ENCODE measurements at regions of chr13 and their contacts with region 1.

Region 1: GRCh38 chr13:30408319-30409101 is 13.8 kb upstream of the UBE2L5 start:
- DNase-seq: peak; percentile 71 to 97
- H3K4me3 ChIP-seq: peak overlapping the region; percentile 39 to 55
- H3K27ac ChIP-seq: peak overlapping the region; percentile 95 to 96
- H3K4me1 ChIP-seq: peaks cover 5 to 21% of the 10 kb centered on the region in 2 donors
- H3K27me3 ChIP-seq: no peaks in the 10 kb centered on the region
- CTCF ChIP-seq: peak; percentile 75 to 91 (median 90)

Region 2: GRCh38 chr13:30132623-30133553 is 275.6 kb before region 1 on chr13:
- intact Hi-C with region 1: loop called (anchors 2 kb)
- DNase-seq: peak; percentile 87 to 98
- H3K4me3 ChIP-seq: peak overlapping the region in 1 of 2 donors; percentile 10
- H3K27ac ChIP-seq: no peak overlapping the region
- H3K4me1 ChIP-seq: no peaks in the 10 kb centered on the region
- H3K27me3 ChIP-seq: no peaks in the 10 kb centered on the region
- CTCF ChIP-seq: peak; percentile 83 to 95 (median 84)

Region 3: DNA sequence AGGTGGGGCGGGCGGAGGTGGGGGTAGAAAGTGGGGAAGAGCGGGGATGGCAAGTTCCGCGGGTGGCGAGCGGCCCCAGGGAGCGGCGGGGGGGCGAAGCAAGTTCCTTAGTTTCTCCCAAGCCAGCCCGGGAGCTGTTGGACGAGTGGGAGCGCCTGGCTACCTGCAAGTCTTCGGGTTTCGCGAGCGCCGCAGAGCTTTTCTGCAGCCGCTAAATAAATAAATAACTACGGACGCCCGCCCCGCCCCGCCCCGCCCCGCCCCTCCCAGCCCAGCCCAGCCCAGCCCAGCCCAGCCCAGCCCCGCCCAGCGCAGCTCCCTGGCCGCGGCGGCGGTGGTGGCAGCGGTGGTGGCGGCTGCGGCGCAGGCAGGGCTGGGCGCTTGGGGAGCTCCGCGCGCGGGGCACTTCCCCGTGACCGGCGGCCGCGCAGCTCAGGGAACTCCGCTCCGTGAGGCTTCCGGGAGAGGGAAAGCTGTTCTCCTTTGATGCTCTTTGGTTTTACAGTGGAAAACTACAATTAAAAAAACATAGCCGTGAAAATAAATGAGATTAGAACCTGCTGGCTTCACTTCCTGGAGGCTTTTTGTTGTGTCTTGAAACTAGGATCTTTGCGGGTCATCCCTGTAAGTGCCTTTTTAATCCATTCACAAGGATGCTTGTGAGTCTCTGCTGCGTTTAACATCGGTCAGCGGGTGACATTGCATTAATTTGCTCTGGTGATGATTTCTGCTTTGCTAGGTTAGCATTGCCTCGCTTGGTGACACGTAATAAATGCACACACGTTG is 13.7 kb after region 1 on chr13 and contains the start of gene UBE2L5:
- intact Hi-C with region 1: loop called (anchors 1 kb)
- DNase-seq: peak; percentile 10 to 87
- H3K4me3 ChIP-seq: peak within 1 kb of the TSS; percentile 73 to 75
- H3K27ac ChIP-seq: peak within 1 kb of the TSS; percentile 95 to 98
- H3K4me1 ChIP-seq: peaks cover 8 to 12% of the 10 kb centered on the region in 2 donors
- H3K27me3 ChIP-seq: no peaks in the 10 kb centered on the region
- CTCF ChIP-seq: no peak
- total RNA-seq, gene UBE2L5: not detected

Region 4: DNA sequence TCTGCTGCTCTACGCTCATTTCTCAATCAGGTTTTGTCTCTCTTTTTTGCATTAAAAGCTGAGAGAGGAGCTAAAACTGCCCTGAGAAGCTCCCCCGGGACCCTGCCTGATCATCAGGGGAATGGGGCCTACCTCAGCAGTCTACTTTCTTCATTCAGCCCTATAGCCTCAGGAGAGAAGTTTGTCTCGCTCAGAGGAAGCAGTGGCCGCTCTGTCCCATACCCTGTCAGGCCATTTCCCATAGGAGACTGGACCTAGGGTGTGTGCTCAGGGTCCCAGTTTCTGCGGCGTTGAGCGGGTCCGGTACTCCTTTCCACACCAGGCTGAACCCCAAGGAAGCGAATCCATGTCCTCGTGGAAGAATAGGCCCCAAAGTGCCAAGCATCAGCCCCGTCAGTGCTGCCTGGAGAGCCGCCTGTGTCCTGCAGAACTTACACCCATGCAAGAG is 35.5 kb after region 1 on chr13:
- intact Hi-C with region 1: loop called (anchors 1 kb)
- DNase-seq: no peak
- H3K4me3 ChIP-seq: no peak overlapping the region
- H3K27ac ChIP-seq: no peak overlapping the region
- H3K4me1 ChIP-seq: no peaks in the 10 kb centered on the region
- H3K27me3 ChIP-seq: no peaks in the 10 kb centered on the region
- CTCF ChIP-seq: no peak

Region 5: GRCh38 chr13:30673669-30674521 is 265.4 kb after region 1 on chr13:
- intact Hi-C with region 1: loop called (anchors 10 kb)
- DNase-seq: peak; percentile 79 to 96
- H3K4me3 ChIP-seq: peak overlapping the region; percentile 53 to 64
- H3K27ac ChIP-seq: peak overlapping the region; percentile 59 to 88
- H3K4me1 ChIP-seq: no peaks in the 10 kb centered on the region
- H3K27me3 ChIP-seq: no peaks in the 10 kb centered on the region
- CTCF ChIP-seq: peak; percentile 58 to 81 (median 61)

Region 6: DNA sequence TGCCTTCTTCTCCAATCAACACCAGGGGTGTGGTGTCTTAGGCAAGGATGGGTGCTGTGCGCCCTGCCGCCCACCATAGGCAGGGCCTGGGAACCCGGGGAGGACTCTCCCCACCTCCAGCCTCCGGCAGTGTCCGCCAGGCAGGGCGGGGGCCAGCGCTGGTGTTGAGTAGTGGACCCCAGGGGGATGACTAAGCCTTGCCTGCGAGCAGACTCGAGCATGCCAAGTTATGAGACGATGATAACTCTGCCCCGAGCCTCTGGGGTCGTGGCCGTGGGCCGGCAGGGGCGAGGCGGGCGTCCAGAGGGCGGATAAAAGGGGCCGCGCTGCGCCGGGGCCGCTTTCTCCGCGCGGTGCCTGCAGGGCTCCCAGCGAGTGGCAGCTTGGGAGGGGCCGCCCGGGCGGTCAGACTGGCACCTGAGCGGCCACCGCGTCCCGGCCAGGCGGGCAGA is 497.4 kb after region 1 on chr13 and contains the start of gene MEDAG:
- intact Hi-C with region 1: loop called (anchors 5 kb)
- DNase-seq: peak; percentile 76 to 96
- H3K4me3 ChIP-seq: peak within 1 kb of the TSS; percentile 56 to 81
- H3K27ac ChIP-seq: peak within 1 kb of the TSS; percentile 95 to 98
- H3K4me1 ChIP-seq: peaks cover 0 to 21% of the 10 kb centered on the region in 2 donors
- H3K27me3 ChIP-seq: no peaks in the 10 kb centered on the region
- CTCF ChIP-seq: no peak
- total RNA-seq, gene MEDAG: 98.8 TPM

Region 7: GRCh38 chr13:31044377-31045285 is 636.1 kb after region 1 on chr13:
- intact Hi-C with region 1: loop called (anchors 5 kb)
- DNase-seq: peak; percentile 28 to 88
- H3K4me3 ChIP-seq: no peak overlapping the region
- H3K27ac ChIP-seq: peak overlapping the region in 1 of 2 donors; percentile 23
- H3K4me1 ChIP-seq: peaks cover 0 to 2% of the 10 kb centered on the region in 2 donors
- H3K27me3 ChIP-seq: no peaks in the 10 kb centered on the region
- CTCF ChIP-seq: peak; percentile 68 to 96 (median 89)

Measured in ascending aorta (tissue), 2 donors.